Ascending aorta (tissue), 2 donors: ENCODE measurements at regions of chr10 and their contacts with region 1.

Region 1: DNA sequence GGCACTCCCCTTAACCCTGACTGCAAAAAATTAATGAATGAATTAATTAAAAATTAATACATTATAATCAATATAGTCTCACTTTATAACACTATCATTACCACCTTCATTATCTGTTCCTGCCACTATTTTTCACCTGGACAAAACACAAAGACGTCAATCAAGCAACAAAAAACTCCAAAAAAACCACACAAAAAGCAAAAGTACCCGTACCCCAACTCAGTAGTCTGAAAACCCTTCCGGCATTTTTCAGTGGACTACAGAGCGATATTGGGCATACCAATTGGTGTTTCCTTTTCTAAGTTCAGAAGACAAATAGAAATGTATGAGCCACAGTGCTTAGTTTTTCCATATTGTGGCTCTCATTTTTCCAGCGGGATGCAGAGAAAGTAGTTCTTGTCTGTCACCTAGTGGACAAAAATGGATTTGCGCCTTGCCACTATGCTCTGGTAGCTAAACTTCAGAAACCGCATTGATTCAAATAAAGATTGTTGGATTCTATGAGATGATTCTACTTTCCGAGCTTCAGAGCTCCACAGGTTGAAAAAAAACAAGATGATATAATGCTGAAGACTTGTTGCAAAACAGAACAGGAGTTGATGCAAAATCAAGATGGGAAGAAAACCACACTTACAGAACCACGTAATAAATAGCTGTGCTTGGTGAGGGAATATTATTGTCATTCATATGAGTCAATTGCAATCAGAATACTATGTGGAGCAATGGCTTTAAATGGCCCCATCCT is 50.6 kb upstream of the ITGB1 start:
- DNase-seq: peak in 1 of 2 donors; percentile 83
- H3K4me3 ChIP-seq: no peak overlapping the region
- H3K27ac ChIP-seq: peak overlapping the region in 1 of 2 donors; percentile 26
- H3K4me1 ChIP-seq: peaks cover 3 to 10% of the 10 kb centered on the region in 2 donors
- H3K27me3 ChIP-seq: no peaks in the 10 kb centered on the region
- CTCF ChIP-seq: peak; percentile 95 to 98 (median 97)

Region 2: DNA sequence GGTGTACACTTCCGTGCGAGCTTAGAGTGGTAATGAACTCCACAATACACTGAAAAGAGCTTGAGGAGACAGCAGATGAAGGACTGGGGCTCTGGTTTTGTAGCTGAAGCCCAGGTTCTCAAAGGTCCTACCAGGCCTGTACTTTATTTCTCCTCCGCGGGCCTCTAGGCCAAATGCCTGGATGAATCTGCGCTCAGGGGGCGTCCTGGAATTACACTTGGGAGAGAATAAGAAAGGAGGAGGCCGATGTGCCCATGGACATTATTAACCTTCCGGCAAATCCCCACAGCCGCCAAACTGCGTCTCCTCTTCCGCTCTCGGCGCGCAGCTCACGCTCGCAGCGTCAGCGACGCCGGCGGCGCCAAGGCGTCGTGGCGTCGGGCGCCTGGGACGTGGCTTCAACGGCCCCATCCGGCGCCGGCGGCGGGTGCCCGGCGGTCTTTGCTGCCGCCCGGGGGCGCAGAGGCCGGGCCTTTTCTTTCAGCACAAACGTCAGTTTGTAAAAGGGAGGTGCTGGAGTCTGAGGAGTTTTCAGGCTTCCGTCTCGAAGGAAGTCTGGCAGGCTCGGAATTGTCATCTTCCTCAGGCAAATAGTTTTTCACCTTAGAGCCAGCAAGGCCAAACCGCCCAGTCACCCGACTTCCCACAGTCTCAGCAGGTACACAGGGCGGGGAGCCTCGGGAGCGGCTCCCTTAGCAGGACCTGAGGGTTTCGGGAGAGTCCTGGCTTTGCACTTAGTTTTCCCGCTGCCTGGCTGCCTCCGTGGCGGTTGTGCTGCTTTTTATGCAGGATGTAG is 562.7 kb before region 1 on chr10 and contains the start of gene CCDC7:
- intact Hi-C with region 1: loop called (anchors 10 kb)
- DNase-seq: peak; percentile 29 to 92
- H3K4me3 ChIP-seq: peak within 1 kb of the TSS; percentile 85 to 86
- H3K27ac ChIP-seq: peak within 1 kb of the TSS; percentile 98 to 99
- H3K4me1 ChIP-seq: peaks cover 0 to 12% of the 10 kb centered on the region in 2 donors
- H3K27me3 ChIP-seq: no peaks in the 10 kb centered on the region
- CTCF ChIP-seq: peak; percentile 24 to 47 (median 41)
- total RNA-seq, gene CCDC7: 56.9 TPM

Region 3: DNA sequence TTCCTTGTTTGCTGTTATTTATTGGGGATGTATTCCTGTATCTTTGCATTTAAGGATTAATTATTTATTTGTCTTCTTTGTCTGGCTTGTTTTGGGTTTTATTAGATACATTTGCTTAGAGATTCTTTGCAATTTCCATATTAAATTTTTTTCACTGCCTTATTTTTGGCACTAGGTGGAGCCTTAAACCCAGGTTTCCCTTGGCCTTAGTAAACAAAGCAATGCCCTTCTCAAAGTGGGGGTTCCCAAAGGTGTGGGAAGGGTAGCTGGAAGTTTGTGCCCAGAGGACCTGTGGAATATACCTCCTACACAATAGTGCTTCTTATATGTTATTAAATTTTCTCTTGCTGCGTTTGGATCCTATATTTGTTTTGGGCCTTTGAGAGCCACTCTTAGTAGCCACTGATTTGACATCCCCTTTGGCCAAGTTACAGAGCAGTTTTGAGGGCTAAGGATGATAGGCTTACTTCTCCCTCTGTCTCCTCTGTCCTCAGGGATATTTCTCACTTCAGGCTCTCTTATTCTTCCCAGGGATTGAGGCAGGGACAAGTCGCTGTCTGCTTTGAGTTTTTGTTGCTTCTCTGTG is 213.0 kb before region 1 on chr10:
- intact Hi-C with region 1: loop called (anchors 1 kb)
- DNase-seq: no peak
- H3K4me3 ChIP-seq: no peak overlapping the region
- H3K27ac ChIP-seq: no peak overlapping the region
- H3K4me1 ChIP-seq: no peaks in the 10 kb centered on the region
- H3K27me3 ChIP-seq: no peaks in the 10 kb centered on the region
- CTCF ChIP-seq: peak; percentile 45 to 78 (median 57)

Region 4: GRCh38 chr10:32943854-32944661 is 64.6 kb before region 1 on chr10:
- intact Hi-C with region 1: loop called (anchors 5 kb)
- DNase-seq: peak in 1 of 2 donors; percentile 63
- H3K4me3 ChIP-seq: peak overlapping the region in 1 of 2 donors; percentile 11
- H3K27ac ChIP-seq: peak overlapping the region; percentile 46 to 56
- H3K4me1 ChIP-seq: peaks cover 27 to 55% of the 10 kb centered on the region in 2 donors
- H3K27me3 ChIP-seq: no peaks in the 10 kb centered on the region
- CTCF ChIP-seq: no peak

Region 5: GRCh38 chr10:32958085-32959005 is 50.3 kb before region 1 on chr10 and contains the start of gene ITGB1:
- intact Hi-C with region 1: loop called (anchors 1 kb)
- DNase-seq: peak; percentile 84 to 98
- H3K4me3 ChIP-seq: peak within 1 kb of the TSS; percentile 72 to 90
- H3K27ac ChIP-seq: peak within 1 kb of the TSS; percentile 97 to 99
- H3K4me1 ChIP-seq: peaks cover 4 to 36% of the 10 kb centered on the region in 2 donors
- H3K27me3 ChIP-seq: no peaks in the 10 kb centered on the region
- CTCF ChIP-seq: no peak
- total RNA-seq, gene ITGB1: 569 TPM

Region 6: DNA sequence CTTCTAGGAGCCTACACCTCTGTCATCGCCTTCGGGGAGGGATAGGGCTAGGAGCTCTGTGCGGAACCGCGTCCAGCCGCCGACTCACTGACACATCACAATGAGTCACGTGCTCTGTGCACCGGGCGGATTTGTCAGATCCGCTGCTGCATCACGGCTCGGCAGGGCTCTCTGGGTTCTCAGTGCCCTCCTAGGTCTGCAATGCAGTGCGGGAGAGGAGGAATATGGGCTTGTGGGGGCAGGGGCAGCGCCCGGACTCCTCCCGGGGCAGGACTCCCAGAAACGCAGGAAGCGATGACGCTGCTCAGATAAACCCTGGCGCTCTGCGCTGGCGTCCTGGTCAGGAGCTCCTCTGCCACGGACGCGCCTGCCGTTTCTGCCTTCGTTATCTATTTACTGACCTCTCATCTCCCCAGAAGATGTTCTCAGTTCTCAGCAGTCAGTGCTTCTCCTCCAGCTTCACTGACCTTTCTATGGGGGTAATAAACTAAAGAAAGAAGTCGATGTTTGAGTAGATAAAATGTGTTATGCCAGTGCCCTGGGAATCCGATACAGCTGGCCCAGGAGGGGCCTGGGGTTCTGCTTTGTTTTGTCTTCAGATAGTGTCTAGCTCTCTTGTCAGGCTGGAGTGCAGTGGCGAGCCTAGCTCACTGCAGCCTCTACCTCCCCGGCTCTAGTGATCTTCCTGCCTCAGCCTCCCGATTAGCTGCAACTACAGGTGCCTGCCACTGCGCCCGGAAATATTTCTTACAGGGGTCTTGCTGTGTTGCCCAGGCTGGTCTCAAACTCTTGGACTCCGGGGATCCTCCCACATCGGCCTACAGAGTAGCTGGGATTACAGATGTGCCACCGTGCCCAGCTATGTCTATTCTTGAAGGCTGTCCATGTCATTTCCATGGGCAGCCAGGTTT is 27.9 kb before region 1 on chr10:
- intact Hi-C with region 1: loop called (anchors 1 kb)
- DNase-seq: peak; percentile 92 to 99
- H3K4me3 ChIP-seq: peak overlapping the region; percentile 41 to 61
- H3K27ac ChIP-seq: peak overlapping the region; percentile 93 to 96
- H3K4me1 ChIP-seq: peaks cover 3 to 19% of the 10 kb centered on the region in 2 donors
- H3K27me3 ChIP-seq: no peaks in the 10 kb centered on the region
- CTCF ChIP-seq: no peak

Region 7: DNA sequence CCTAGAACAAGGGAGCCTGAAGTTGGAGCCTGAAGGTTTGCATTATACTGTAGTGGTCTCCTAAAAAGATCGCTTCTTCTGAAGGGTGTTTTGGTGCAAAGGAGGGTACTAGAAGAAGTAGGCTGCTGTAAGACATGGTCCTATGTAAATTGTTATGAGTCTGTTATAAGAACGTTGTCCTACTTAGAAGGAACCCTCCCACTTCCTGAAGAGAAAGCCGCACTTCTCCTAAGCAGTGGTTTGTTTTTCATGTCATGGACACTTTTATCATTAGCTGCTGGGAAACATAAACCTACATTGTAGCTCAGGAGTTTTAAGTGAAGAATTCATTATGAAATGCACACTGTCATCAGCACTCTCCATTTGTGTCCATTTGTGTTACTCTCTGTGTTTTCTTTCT is 78.5 kb after region 1 on chr10:
- intact Hi-C with region 1: no loop called
- DNase-seq: no peak
- H3K4me3 ChIP-seq: no peak overlapping the region
- H3K27ac ChIP-seq: no peak overlapping the region
- H3K4me1 ChIP-seq: no peaks in the 10 kb centered on the region
- H3K27me3 ChIP-seq: no peaks in the 10 kb centered on the region
- CTCF ChIP-seq: no peak